Panc1 (cell line): ENCODE measurements at regions of chr11 and their contacts with region 1.

Region 1: DNA sequence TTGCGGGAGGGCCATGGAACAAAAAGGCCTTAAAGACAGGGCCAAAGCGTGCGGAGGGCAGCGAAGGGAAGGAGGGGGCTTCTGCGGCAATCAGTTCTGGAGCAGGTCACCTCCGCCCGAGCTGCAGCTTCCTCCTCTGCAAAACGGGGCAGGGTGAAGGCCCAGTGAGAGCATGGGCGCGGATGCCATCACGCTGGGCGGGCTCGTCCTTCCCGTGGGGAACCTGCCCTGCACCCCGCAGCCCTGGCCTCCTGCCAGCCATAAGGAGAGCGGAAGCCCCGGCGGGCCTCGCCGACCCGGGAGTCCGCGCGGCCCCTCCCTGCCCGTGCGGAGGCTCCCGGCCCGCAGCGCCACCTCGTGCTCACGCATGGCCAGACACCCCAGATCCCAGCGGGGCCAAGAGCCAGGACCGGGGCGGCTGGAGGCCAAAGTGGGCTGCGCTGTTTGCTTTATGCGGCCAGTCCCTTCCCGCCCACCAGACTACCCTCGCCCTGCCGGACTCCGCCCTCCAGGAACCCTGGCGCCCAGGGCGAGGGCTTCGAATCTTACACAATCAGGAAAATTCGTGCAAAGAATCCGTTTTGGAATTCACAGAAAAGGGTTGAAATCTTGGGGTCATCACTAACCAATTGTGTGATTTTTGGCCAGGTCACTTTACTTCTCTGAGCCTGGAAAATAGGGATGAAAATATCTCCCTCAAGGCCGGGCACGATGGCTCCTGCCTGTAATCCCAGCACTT is 16.1 kb downstream of the TSKU start:
- DNase-seq: no peak
- ATAC-seq: peak; percentile 93
- H3K4me3 ChIP-seq: peak overlapping the region; percentile 15; a peak in 3 of 4 replicates
- H3K27ac ChIP-seq: 0 out of 2 replicates have a peak overlapping the region, but pooled peaks have one; percentile 23
- H3K4me1 ChIP-seq: peaks cover 6% of the 10 kb centered on the region
- H3K27me3 ChIP-seq: no peaks in the 10 kb centered on the region
- CTCF ChIP-seq: peak; percentile 98

Region 2: GRCh38 chr11:76706672-76707071 is 92.6 kb before region 1 on chr11:
- CTCF ChIA-PET with region 1: no interaction called
- POLR2A ChIA-PET with region 1: no interaction called
- in situ Hi-C with region 1: no loop called
- intact Hi-C with region 1: no loop called
- DNase-seq: no peak
- ATAC-seq: no peak
- H3K4me3 ChIP-seq: no peak overlapping the region
- H3K27ac ChIP-seq: no peak overlapping the region
- H3K4me1 ChIP-seq: no peaks in the 10 kb centered on the region
- H3K27me3 ChIP-seq: no peaks in the 10 kb centered on the region
- CTCF ChIP-seq: no peak

Region 3: GRCh38 chr11:76721755-76722677 is 77.2 kb before region 1 on chr11:
- CTCF ChIA-PET with region 1: interaction called, 12 read pairs
- POLR2A ChIA-PET with region 1: no interaction called
- in situ Hi-C with region 1: no loop called
- intact Hi-C with region 1: no loop called
- DNase-seq: peak; percentile 55
- ATAC-seq: peak; percentile 98
- H3K4me3 ChIP-seq: peak overlapping the region in 1 of 2 experiments; percentile 7; a peak in 1 of 4 replicates
- H3K27ac ChIP-seq: no peak overlapping the region
- H3K4me1 ChIP-seq: no peaks in the 10 kb centered on the region
- H3K27me3 ChIP-seq: peaks cover 13% of the 10 kb centered on the region
- CTCF ChIP-seq: peak; percentile 99